ENCODE measurements at regions of chr10 and their contacts with region 1.

Region 1: GRCh38 chr10:111207500-111207899 is 130.7 kb downstream of the ADRA2A start:
- DNase-seq: no peak
- ATAC-seq: peak; percentile 63
- H3K4me3 ChIP-seq: no peak overlapping the region
- H3K27ac ChIP-seq: no peak overlapping the region
- H3K4me1 ChIP-seq: no peaks in the 10 kb centered on the region
- H3K27me3 ChIP-seq: peaks cover 0 to 2% of the 10 kb centered on the region in 2 experiments; a peak in 1 of 4 replicates
- CTCF ChIP-seq: peak; percentile 32 to 40 (median 39); a peak in 4 of 6 replicates
- EP300 ChIP-seq: no peak
- POLR2A ChIP-seq: no peak
- RAD21 ChIP-seq: peak; percentile 64

Region 2: GRCh38 chr10:110481934-110482333 is 725.6 kb before region 1 on chr10:
- CTCF ChIA-PET with region 1: no interaction called
- POLR2A ChIA-PET with region 1: no interaction called
- RAD21 ChIA-PET with region 1: no interaction called
- SMC1A ChIA-PET with region 1: no interaction called
- in situ Hi-C with region 1: no loop called
- intact Hi-C with region 1: no loop called
- DNase-seq: no peak
- ATAC-seq: no peak
- H3K4me3 ChIP-seq: no peak overlapping the region
- H3K27ac ChIP-seq: no peak overlapping the region
- H3K4me1 ChIP-seq: peaks cover 5% of the 10 kb centered on the region
- H3K27me3 ChIP-seq: no peaks in the 10 kb centered on the region
- CTCF ChIP-seq: no peak
- EP300 ChIP-seq: no peak
- POLR2A ChIP-seq: no peak
- RAD21 ChIP-seq: no peak

Region 3: DNA sequence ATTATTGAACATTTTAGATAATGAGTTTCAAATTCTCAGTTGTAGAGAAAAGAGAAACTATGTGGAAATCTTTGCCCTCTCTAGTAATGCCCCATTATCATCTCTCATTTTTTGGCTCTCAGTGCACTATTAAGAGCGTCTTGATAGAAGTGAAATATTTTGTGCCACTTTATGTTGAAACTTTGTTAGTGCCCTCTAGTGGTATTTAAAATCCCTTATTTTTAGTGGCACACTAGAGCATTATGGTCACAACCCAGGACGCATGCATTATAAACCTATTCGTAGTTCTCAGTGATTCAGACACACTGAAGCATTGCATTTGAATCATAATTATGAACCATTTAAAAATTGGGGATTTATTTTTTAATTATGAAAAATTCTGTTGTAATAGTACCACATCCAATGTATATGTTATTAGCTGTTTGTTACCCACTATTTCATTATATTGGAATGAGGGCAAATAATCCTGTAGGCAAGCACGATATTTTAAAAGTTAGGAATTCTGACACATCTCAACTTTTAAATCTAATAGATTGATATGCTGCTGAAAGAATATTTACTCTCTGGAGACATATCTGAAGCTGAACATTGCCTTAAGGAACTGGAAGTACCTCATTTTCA is 313.8 kb before region 1 on chr10:
- CTCF ChIA-PET with region 1: interaction called, 3 read pairs
- POLR2A ChIA-PET with region 1: no interaction called
- RAD21 ChIA-PET with region 1: no interaction called
- SMC1A ChIA-PET with region 1: no interaction called
- in situ Hi-C with region 1: no loop called
- intact Hi-C with region 1: loop called (anchors 10 kb)
- DNase-seq: no peak
- ATAC-seq: peak; percentile 93
- H3K4me3 ChIP-seq: no peak overlapping the region
- H3K27ac ChIP-seq: no peak overlapping the region
- H3K4me1 ChIP-seq: no peaks in the 10 kb centered on the region
- H3K27me3 ChIP-seq: no peaks in the 10 kb centered on the region
- CTCF ChIP-seq: peak; percentile 34 to 52 (median 44); a peak in 4 of 6 replicates
- EP300 ChIP-seq: no peak
- POLR2A ChIP-seq: no peak
- RAD21 ChIP-seq: peak; percentile 66